B cell (primary cell): ENCODE measurements at regions of chr15 and their contacts with region 1.

Region 1: DNA sequence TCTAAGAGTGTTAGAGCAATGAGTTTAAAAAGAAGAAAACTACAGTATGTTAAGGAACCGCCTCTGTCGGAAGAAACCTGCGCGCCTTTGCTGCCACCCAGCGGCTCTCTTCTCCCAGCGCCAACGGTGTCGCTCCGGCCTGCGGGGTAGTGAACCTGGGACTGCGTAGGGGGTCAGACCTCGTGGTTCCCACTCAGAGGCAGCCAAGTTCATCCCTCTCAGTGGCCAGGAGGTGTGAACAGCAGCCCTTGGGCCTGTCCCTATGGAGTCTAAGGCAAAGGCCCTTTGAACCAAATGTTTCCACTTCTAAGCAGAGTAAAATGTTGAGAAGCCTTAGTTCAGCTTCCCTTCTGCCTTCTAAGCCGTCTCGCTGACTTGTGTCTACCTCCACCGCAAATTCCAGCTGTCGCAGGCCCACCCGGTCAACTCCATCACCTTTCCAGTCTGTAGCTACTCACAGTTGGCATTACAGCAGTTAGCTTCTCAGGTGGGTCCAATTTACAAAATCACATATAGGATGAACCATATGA is 980 bp upstream of the RAB27A start:
- DNase-seq: peak; percentile 88
- ATAC-seq: peak; percentile 79
- H3K4me3 ChIP-seq: peak overlapping the region; percentile 67 to 100 (median 92)
- H3K4me3 Mint-ChIP-seq: peak overlapping the region; percentile 89
- H3K27ac ChIP-seq: peak overlapping the region; percentile 72 to 93
- H3K27ac Mint-ChIP-seq: peak overlapping the region; percentile 88
- H3K4me1 ChIP-seq: peaks cover 10 to 18% of the 10 kb centered on the region in 2 donors
- H3K4me1 Mint-ChIP-seq: peaks cover 25% of the 10 kb centered on the region
- H3K27me3 ChIP-seq: no peaks in the 10 kb centered on the region
- H3K27me3 Mint-ChIP-seq: no peaks in the 10 kb centered on the region
- CTCF ChIP-seq: peak; percentile 93

Region 2: DNA sequence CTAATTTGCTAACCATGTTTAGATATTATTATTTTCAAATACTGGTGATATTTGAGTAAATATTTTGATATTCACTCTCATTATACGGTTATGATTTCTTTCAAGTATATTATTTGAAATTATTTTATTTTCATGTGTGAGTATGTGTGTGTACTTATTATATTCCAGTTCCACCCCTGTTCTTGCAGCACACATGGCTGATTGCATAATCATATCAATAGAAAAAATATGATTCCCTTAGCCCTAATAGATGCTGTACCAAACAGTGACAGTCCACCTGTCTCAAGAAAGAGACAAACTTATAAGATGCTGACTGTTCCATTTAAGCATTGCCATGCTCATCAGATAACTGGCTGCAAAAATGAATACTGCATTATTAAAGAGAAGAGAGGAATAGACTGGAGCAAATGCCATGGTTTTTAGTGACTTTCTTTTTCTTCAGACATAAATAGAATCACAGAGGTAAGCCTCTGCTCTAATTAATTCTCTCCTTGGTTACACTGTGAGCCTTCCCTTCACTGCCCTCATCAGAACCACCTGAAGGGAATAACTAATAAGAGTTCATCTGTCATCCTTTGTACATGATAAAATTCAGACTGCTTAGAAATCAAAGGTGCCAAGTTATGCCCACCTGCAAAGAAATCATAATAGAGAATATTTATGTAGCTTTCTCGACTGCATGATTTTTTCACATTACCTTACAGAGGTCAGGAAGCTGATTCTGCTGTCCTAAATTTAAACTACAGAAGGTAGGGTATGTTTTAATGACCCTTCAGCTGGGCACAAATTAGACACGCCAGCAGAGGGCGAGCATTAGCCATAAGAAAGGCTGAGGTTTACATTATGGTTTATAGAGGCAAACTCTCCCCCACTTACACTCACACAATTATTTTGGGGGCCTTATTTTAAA is 1328.0 kb before region 1 on chr15:
- CTCF ChIA-PET with region 1: no interaction called
- POLR2A ChIA-PET with region 1: no interaction called
- intact Hi-C with region 1: loop called (anchors 10 kb)
- DNase-seq: peak; percentile 3
- ATAC-seq: no peak
- H3K4me3 ChIP-seq: no peak overlapping the region
- H3K4me3 Mint-ChIP-seq: no peak overlapping the region
- H3K27ac ChIP-seq: no peak overlapping the region
- H3K27ac Mint-ChIP-seq: no peak overlapping the region
- H3K4me1 ChIP-seq: no peaks in the 10 kb centered on the region
- H3K4me1 Mint-ChIP-seq: no peaks in the 10 kb centered on the region
- H3K27me3 ChIP-seq: no peaks in the 10 kb centered on the region
- H3K27me3 Mint-ChIP-seq: no peaks in the 10 kb centered on the region
- CTCF ChIP-seq: no peak

Region 3: GRCh38 chr15:55221090-55222011 is 69.2 kb before region 1 on chr15:
- CTCF ChIA-PET with region 1: interaction called, 92 read pairs
- POLR2A ChIA-PET with region 1: no interaction called
- intact Hi-C with region 1: loop called (anchors 1 kb)
- DNase-seq: peak; percentile 33
- ATAC-seq: peak; percentile 25
- H3K4me3 ChIP-seq: no peak overlapping the region
- H3K4me3 Mint-ChIP-seq: peak overlapping the region; percentile 30
- H3K27ac ChIP-seq: no peak overlapping the region
- H3K27ac Mint-ChIP-seq: peak overlapping the region; percentile 10
- H3K4me1 ChIP-seq: peaks cover 54 to 58% of the 10 kb centered on the region in 2 donors
- H3K4me1 Mint-ChIP-seq: peaks cover 58% of the 10 kb centered on the region
- H3K27me3 ChIP-seq: no peaks in the 10 kb centered on the region
- H3K27me3 Mint-ChIP-seq: no peaks in the 10 kb centered on the region
- CTCF ChIP-seq: no peak

Region 4: GRCh38 chr15:55267401-55268175 is 23.0 kb before region 1 on chr15:
- CTCF ChIA-PET with region 1: interaction called, 9 read pairs
- POLR2A ChIA-PET with region 1: interaction called, 14 read pairs
- intact Hi-C with region 1: loop called (anchors 1 kb)
- DNase-seq: peak; percentile 80
- ATAC-seq: peak; percentile 97
- H3K4me3 ChIP-seq: peak overlapping the region; percentile 7 to 70 (median 46)
- H3K4me3 Mint-ChIP-seq: peak overlapping the region; percentile 75
- H3K27ac ChIP-seq: peak overlapping the region; percentile 73 to 90
- H3K27ac Mint-ChIP-seq: peak overlapping the region; percentile 89
- H3K4me1 ChIP-seq: peaks cover 21% of the 10 kb centered on the region in 2 donors
- H3K4me1 Mint-ChIP-seq: peaks cover 29% of the 10 kb centered on the region
- H3K27me3 ChIP-seq: no peaks in the 10 kb centered on the region
- H3K27me3 Mint-ChIP-seq: no peaks in the 10 kb centered on the region
- CTCF ChIP-seq: no peak

Region 5: DNA sequence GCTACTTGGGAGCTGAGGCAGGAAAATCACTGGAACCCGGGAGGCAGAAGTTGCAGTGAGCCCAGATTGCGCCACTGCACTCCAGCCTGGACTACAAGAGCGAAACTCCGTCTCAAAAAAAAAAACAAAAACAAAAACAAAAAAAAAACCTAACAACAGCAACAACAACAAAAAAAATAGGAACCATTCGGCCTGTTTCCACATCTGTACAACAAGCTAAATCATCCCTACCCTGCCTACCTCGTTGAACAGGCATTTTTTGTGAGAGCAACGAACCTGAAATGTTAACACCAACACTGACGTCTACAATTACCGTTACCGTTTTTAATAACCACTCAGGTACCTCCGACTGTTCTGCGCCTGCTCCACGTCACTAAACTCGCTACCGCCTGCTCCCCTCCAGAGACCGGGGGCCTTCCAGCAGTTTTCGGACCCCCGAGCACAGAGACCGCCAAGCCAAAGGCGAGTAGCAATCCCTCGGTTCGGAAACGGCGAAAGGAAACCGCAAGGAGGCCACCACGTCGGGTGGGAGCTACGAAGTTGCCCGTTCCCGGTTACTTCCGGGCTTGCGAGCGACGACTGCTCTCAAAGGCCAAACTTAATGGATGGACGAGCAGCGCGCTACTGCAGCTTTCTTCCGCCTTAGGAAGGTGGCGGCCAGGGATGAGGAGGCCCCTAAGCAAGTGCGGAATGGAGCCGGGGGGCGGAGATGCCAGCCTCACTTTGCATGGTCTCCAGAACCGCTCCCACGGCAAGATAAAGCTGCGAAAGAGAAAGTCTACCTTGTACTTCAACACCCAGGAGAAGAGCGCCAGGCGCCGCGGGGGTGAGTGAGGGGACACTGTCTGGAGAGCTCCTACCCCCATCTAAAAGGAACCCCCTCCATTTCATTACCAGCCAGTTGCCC is 28.2 kb after region 1 on chr15 and contains the starts of genes PIGB and PIGBOS1:
- CTCF ChIA-PET with region 1: interaction called, 7 read pairs
- POLR2A ChIA-PET with region 1: no interaction called
- intact Hi-C with region 1: loop called (anchors 1 kb)
- DNase-seq: peak; percentile 96
- ATAC-seq: peak; percentile 84
- H3K4me3 ChIP-seq: peak within 1 kb of the TSS; percentile 81 to 96 (median 89)
- H3K4me3 Mint-ChIP-seq: peak within 1 kb of the TSS; percentile 100
- H3K27ac ChIP-seq: peak within 1 kb of the TSS; percentile 96 to 98
- H3K27ac Mint-ChIP-seq: peak within 1 kb of the TSS; percentile 100
- H3K4me1 ChIP-seq: peaks cover 28 to 40% of the 10 kb centered on the region in 2 donors
- H3K4me1 Mint-ChIP-seq: peaks cover 62% of the 10 kb centered on the region
- H3K27me3 ChIP-seq: no peaks in the 10 kb centered on the region
- H3K27me3 Mint-ChIP-seq: no peaks in the 10 kb centered on the region
- CTCF ChIP-seq: no peak
- total RNA-seq, gene PIGB: 39.2 and 41.7 TPM in 2 replicates
- total RNA-seq, gene PIGBOS1: 14.6 and 16.4 TPM in 2 replicates

Region 6: DNA sequence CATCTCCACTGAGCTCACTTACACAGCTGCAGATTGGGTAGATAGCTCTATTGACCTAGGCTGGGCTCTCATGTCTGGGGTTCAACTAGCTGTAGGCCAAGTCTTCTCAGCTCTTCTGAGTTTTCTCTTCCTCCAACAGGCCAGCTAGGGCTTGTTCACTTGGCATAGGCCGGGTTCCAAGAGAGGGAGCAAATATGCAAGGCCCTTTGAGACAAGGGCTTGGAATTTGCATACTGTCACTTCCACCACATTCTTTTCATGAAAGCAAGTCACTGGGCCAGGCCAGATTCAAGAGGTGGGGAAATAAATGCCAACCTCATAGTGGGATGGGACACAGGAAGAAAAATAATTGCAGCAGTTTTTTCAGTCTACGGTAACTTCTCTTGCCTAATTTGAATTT is 53.6 kb after region 1 on chr15:
- CTCF ChIA-PET with region 1: no interaction called
- POLR2A ChIA-PET with region 1: no interaction called
- intact Hi-C with region 1: no loop called
- DNase-seq: no peak
- ATAC-seq: no peak
- H3K4me3 ChIP-seq: no peak overlapping the region
- H3K4me3 Mint-ChIP-seq: no peak overlapping the region
- H3K27ac ChIP-seq: no peak overlapping the region
- H3K27ac Mint-ChIP-seq: peak overlapping the region; percentile 12
- H3K4me1 ChIP-seq: no peaks in the 10 kb centered on the region
- H3K4me1 Mint-ChIP-seq: no peaks in the 10 kb centered on the region
- H3K27me3 ChIP-seq: no peaks in the 10 kb centered on the region
- H3K27me3 Mint-ChIP-seq: no peaks in the 10 kb centered on the region
- CTCF ChIP-seq: no peak